Common myeloid progenitor, CD34-positive (primary cell): ENCODE measurements at regions of chr13 and their contacts with region 1.

Region 1: DNA sequence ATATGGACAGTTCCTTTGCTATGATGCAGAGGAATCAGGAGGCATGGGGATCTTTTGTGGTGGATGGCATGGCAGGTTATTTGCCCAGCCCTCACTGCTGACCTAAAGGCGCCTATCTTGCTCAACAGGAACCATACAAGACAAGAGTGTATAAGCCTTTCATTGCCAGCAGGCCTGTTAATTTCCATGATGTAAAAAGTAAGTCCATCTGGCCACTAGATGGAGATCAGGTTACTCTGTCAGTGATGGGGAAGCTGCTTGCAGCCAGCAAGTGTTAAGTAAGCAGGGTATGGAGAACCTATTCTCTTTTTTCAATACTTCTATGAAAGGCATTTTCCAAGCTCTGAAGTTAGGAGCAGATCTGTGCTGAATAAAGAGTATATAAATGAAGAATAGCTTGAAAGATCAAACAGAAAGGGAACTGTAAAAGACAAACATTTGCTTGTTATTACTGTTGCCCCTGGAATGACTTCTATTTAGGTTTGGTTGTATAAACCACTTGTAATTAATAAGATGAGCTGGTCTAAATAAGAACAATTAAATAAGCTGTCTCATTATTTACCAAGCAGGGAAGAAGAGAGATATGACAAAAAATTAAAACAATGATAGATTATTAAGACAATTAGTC is 210.9 kb downstream of the RGCC start:
- DNase-seq: peak; percentile 83 to 93 (median 92)
- H3K4me3 ChIP-seq: no peak overlapping the region
- H3K27ac ChIP-seq: no peak overlapping the region
- H3K4me1 ChIP-seq: no peaks in the 10 kb centered on the region
- H3K27me3 ChIP-seq: no peaks in the 10 kb centered on the region

Region 2: GRCh38 chr13:41402681-41403511 is 265.3 kb before region 1 on chr13:
- CTCF ChIA-PET with region 1: no interaction called
- POLR2A ChIA-PET with region 1: no interaction called
- DNase-seq: peak in 1 of 3 donors; percentile 47
- H3K4me3 ChIP-seq: no peak overlapping the region
- H3K27ac ChIP-seq: no peak overlapping the region
- H3K4me1 ChIP-seq: no peaks in the 10 kb centered on the region
- H3K27me3 ChIP-seq: no peaks in the 10 kb centered on the region

Region 3: GRCh38 chr13:41678249-41678648 is 10.0 kb after region 1 on chr13:
- CTCF ChIA-PET with region 1: interaction called, 27 read pairs
- POLR2A ChIA-PET with region 1: no interaction called
- DNase-seq: no peak
- H3K4me3 ChIP-seq: no peak overlapping the region
- H3K27ac ChIP-seq: no peak overlapping the region
- H3K4me1 ChIP-seq: no peaks in the 10 kb centered on the region
- H3K27me3 ChIP-seq: no peaks in the 10 kb centered on the region

Region 4: DNA sequence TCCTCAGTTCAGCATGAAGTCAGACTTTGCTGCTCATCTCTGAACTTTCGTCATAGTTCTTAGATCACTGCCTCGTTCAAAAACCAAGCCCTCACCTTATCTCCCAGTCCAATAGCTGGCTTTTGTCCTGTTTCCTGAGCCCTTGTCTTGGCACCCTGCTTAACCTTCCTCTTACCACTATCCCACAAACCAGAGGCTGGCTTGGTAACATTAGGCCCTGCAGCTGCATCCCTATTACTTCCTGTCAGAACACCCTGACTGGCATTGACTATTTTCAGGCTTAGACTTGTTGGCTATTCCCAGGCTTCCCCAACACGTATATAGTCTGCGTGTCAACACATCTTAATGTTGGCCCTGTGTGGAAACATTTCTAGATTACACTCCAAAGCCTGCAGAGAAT is 120.3 kb after region 1 on chr13:
- CTCF ChIA-PET with region 1: no interaction called
- POLR2A ChIA-PET with region 1: no interaction called
- DNase-seq: peak; percentile 59 to 96 (median 93)
- H3K4me3 ChIP-seq: no peak overlapping the region
- H3K27ac ChIP-seq: no peak overlapping the region
- H3K4me1 ChIP-seq: peaks cover 3 to 15% (median 9%) of the 10 kb centered on the region in 4 experiments
- H3K27me3 ChIP-seq: no peaks in the 10 kb centered on the region

Region 5: GRCh38 chr13:42110410-42111155 is 442.3 kb after region 1 on chr13:
- CTCF ChIA-PET with region 1: interaction called, 145 read pairs
- POLR2A ChIA-PET with region 1: no interaction called
- DNase-seq: peak; percentile 62 to 88 (median 82)
- H3K4me3 ChIP-seq: no peak overlapping the region
- H3K27ac ChIP-seq: no peak overlapping the region
- H3K4me1 ChIP-seq: no peaks in the 10 kb centered on the region
- H3K27me3 ChIP-seq: no peaks in the 10 kb centered on the region

Region 6: DNA sequence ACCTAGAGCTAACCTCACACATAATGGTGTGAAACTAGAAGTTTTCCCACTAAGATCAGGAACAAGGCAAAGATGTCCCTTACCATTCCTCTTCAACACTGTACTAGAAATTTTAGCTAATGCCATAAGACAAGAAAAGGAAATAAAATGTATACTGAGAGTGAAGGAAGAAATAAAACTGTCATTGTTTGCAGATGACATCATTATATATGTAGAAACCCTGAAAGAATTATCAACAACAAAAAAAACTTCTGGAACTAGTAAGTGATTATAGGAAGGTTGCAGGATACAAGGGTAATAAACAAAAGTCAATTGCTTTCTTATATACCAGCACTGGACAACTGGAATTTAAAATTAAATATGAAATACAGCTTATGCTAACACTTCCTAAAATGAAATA is 999.4 kb after region 1 on chr13:
- CTCF ChIA-PET with region 1: no interaction called
- POLR2A ChIA-PET with region 1: no interaction called
- DNase-seq: no peak
- H3K4me3 ChIP-seq: no peak overlapping the region
- H3K27ac ChIP-seq: no peak overlapping the region
- H3K4me1 ChIP-seq: no peaks in the 10 kb centered on the region
- H3K27me3 ChIP-seq: peaks cover 0 to 2% (median 0%) of the 10 kb centered on the region in 5 experiments